Spleen (tissue), 13 donors: ENCODE measurements at regions of chr16 and their contacts with region 1.

Region 1: GRCh38 chr16:77675464-77676324 is 46.6 kb upstream of the NUDT7 start:
- DNase-seq: no peak
- H3K4me3 ChIP-seq: no peak overlapping the region
- H3K27ac ChIP-seq: no peak overlapping the region
- H3K4me1 ChIP-seq: peaks cover 0 to 5% (median 0%) of the 10 kb centered on the region in 6 donors
- H3K27me3 ChIP-seq: peaks cover 0 to 15% (median 0%) of the 10 kb centered on the region in 7 donors
- CTCF ChIP-seq: peak; percentile 82 to 95 (median 90)
- POLR2A ChIP-seq: no peak

Region 2: DNA sequence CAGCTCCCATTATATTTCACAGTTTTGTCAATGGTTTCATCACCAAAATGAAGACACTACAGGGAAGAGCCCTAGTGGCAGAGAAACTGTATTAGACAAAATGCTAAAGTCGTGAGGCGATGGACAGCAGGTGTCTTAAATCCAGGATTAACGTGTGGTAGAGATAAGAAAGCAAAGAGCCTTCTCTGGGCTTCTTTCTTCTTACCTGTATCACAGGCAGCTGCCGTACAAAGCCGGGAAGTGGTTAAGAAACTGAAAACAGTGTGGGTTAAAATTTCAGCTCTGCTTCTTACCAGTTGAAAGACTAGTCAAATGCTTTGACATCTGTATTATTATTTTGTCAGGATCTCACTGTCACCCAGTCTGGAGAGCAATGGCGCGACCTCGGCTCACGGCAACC is 51.6 kb before region 1 on chr16:
- intact Hi-C with region 1: no loop called
- DNase-seq: no peak
- H3K4me3 ChIP-seq: no peak overlapping the region
- H3K27ac ChIP-seq: no peak overlapping the region
- H3K4me1 ChIP-seq: no peaks in the 10 kb centered on the region
- H3K27me3 ChIP-seq: peaks cover 0 to 4% (median 0%) of the 10 kb centered on the region in 7 donors
- CTCF ChIP-seq: no peak
- POLR2A ChIP-seq: no peak

Region 3: DNA sequence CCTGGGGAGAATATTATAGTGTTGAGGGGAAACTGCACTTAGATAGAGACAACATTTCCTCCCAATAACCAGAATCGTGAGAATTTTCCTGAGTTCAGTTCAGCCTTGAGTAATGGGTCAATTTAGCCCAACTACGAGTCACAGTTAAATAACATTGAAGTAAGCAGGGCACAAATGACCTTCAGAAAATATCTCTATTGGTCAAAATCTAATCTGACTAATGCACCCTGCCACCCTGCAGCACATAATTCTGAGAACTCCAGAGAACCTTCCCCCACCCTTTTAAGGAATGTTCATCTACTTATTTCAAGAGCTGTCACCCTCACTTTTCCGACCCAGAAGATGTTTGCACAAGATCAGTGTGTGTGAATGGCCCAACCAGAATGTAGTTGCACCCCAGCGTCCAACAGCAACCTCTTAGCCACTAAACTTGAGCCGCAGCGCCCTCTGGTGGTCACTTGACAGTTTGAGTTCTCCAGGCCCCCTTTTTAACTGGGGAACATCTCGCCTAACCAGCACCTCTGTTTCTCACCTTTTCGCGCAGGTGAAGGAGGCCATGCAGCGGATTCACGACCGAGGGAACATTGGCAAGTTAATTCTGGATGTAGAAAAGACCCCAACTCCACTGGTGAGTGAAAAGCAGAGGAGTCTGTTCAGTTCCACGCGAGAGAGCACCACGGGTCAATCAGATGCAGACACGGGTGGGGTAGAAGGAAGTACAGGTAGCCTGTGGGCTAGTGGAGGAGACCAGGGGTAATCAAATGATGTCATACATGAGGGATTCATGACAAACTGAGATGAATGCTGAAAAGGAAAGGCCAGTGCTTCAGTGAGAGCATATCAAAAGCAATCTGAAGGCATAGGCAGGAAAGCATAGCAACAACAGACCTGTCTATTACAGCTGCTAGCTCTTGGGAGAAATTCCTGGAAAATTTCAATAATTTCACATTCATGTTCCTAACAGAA is 295.9 kb after region 1 on chr16:
- intact Hi-C with region 1: loop called (anchors 1 kb)
- DNase-seq: peak; percentile 90
- H3K4me3 ChIP-seq: no peak overlapping the region
- H3K27ac ChIP-seq: no peak overlapping the region
- H3K4me1 ChIP-seq: no peaks in the 10 kb centered on the region
- H3K27me3 ChIP-seq: peaks cover 0 to 26% (median 0%) of the 10 kb centered on the region in 7 donors
- CTCF ChIP-seq: peak; percentile 47 to 80 (median 74)
- POLR2A ChIP-seq: no peak